ENCODE measurements at regions of chr2 and their contacts with region 1.

Region 1: DNA sequence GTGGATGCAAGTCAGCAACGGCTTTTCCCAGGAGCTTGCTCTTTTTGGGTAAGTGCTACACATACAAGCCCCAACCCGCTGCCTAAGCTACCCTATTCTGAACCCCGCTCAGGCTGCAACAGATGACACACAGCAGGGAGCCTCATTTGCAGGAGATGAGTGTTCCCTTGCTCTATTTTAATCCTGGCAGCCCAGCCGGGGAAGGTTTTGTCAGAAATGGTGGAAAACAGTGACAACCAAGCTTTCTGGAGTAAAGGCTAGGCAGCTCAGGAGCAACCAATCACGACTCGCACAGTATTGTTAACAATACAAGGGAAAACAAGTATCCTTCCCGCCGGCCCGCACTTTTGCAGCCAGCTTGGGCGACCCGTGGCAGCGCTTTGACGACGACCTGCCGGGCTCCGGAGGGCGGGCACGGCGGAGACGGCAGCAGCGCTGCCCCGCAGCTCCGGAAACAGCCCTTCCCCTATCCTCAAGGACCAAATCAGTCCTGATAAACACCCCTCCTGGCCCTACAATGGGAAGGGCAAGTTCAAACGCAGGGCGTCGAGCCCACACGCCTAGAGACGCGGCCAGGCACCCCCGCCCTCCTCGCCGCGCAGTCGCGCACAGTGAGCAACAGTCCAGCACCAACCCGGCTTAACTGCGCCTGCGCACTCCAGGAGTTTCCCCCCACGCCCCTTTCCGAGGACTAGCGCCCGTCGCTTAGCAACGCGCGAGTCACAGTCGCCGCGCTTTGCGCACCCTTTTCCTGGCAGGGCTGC is 74.3 kb upstream of the TSPYL6 start:
- DNase-seq: peak; percentile 98

Region 2: GRCh38 chr2:54271843-54272627 is 58.3 kb before region 1 on chr2:
- CTCF ChIA-PET with region 1: no interaction called
- POLR2A ChIA-PET with region 1: no interaction called
- DNase-seq: no peak

Region 3: GRCh38 chr2:54370405-54371104 is 40.2 kb after region 1 on chr2:
- CTCF ChIA-PET with region 1: interaction called, 10 read pairs
- POLR2A ChIA-PET with region 1: no interaction called
- DNase-seq: no peak

Measured in HEK293T (cell line).